Activated B cell treated with CpG ODN at 0.5 μM for 24 hours (primary cell): ENCODE measurements at regions of chr15 and their contacts with region 1.

Region 1: GRCh38 chr15:75639709-75640482 is at the start of gene IMP3:
- DNase-seq: peak; percentile 83
- ATAC-seq: peak; percentile 94
- H3K4me3 Mint-ChIP-seq: peak within 1 kb of the TSS; percentile 91
- H3K27ac Mint-ChIP-seq: peak within 1 kb of the TSS; percentile 92
- H3K4me1 Mint-ChIP-seq: peaks cover 38% of the 10 kb centered on the region
- H3K27me3 Mint-ChIP-seq: no peaks in the 10 kb centered on the region
- CTCF ChIP-seq: no peak
- total RNA-seq, gene IMP3: 65.6 and 72.6 TPM in 2 replicates

Region 2: GRCh38 chr15:73982222-73982962 is 1657.5 kb before region 1 on chr15:
- CTCF ChIA-PET with region 1: no interaction called
- POLR2A ChIA-PET with region 1: no interaction called
- intact Hi-C with region 1: no loop called
- DNase-seq: no peak
- ATAC-seq: peak; percentile 92
- H3K4me3 Mint-ChIP-seq: peak overlapping the region; percentile 53
- H3K27ac Mint-ChIP-seq: peak overlapping the region; percentile 75
- H3K4me1 Mint-ChIP-seq: peaks cover 62% of the 10 kb centered on the region
- H3K27me3 Mint-ChIP-seq: no peaks in the 10 kb centered on the region
- CTCF ChIP-seq: no peak

Region 3: DNA sequence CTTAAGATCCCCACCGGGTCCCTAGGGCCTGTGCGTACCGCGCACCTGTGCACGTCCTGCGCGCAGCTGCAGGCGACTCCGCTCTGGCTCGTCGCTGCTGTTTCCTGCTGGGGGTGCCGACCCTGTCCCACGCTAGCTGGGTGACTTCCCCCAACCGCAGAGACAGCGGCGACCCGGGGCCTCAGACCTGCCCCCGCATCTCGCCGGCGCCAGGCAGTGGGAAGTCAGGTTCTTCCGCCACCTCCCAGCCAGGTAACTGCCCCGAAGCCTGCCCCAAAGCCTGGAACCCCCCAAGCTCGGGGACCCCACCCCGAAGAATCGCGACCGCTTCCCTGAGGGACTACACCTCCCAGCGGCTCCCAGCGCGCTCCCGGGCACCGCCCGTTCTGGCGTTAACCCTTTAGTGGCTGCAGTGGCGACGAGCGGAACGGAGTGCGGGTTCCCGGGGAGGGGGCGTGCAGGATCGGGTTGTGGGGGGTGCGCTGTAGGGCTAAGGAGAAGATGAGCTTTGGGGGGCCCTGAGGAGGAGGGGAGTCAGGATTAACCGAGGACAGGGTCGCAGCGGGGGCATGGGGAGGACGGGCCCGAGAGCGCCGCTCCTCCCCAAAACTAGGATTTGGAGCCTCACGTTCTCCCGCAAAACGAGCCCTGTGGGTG is 292.5 kb before region 1 on chr15:
- CTCF ChIA-PET with region 1: no interaction called
- POLR2A ChIA-PET with region 1: interaction called, 3 read pairs
- intact Hi-C with region 1: loop called (anchors 5 kb)
- DNase-seq: peak; percentile 69
- ATAC-seq: peak; percentile 77
- H3K4me3 Mint-ChIP-seq: peak overlapping the region; percentile 86
- H3K27ac Mint-ChIP-seq: peak overlapping the region; percentile 85
- H3K4me1 Mint-ChIP-seq: peaks cover 46% of the 10 kb centered on the region
- H3K27me3 Mint-ChIP-seq: peaks cover 1% of the 10 kb centered on the region
- CTCF ChIP-seq: no peak

Region 4: GRCh38 chr15:75578948-75579920 is 60.7 kb before region 1 on chr15 and contains the start of gene PTPN9:
- CTCF ChIA-PET with region 1: interaction called, 6 read pairs
- POLR2A ChIA-PET with region 1: interaction called, 34 read pairs
- intact Hi-C with region 1: loop called (anchors 2 kb)
- DNase-seq: peak; percentile 63
- ATAC-seq: peak; percentile 87
- H3K4me3 Mint-ChIP-seq: peak within 1 kb of the TSS; percentile 92
- H3K27ac Mint-ChIP-seq: peak within 1 kb of the TSS; percentile 82
- H3K4me1 Mint-ChIP-seq: peaks cover 19% of the 10 kb centered on the region
- H3K27me3 Mint-ChIP-seq: no peaks in the 10 kb centered on the region
- CTCF ChIP-seq: no peak
- total RNA-seq, gene PTPN9: 18.2 and 19.2 TPM in 2 replicates

Region 5: DNA sequence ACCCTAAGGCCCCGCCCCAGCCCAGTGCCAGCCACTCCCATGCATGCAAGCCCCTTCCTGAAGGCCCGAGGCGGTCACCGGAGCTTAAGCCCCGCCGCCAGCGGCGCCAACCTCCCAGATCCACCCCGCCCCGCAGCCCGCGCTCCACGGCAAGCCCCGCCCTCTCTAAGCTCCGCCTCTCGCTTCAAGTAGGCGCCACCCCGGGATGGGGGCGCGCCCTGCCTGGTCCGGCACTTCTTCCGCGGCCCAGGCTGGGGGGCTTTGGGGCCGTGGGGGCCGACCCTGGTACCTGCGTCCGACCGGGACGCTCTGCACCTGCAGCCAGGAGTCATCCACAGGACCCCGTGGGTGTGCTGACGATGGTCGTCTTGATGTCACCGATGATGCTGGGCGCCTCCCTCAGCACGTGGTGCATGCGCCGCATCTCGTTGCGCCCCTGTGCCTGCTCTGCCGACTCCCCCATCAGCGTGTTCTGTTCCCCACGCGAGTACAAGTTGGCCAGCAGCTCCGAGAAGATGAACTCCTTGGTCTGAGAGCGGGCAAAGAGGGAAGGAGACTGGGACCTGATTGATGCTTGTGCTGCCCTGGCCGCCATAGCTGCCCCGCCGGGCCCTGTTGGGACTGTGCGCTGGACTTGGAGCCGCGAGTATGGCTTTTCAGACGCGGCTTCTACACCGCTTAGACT is 98.9 kb after region 1 on chr15:
- CTCF ChIA-PET with region 1: no interaction called
- POLR2A ChIA-PET with region 1: interaction called, 8 read pairs
- intact Hi-C with region 1: loop called (anchors 1 kb)
- DNase-seq: peak; percentile 95
- ATAC-seq: peak; percentile 98
- H3K4me3 Mint-ChIP-seq: peak overlapping the region; percentile 82
- H3K27ac Mint-ChIP-seq: peak overlapping the region; percentile 65
- H3K4me1 Mint-ChIP-seq: peaks cover 15% of the 10 kb centered on the region
- H3K27me3 Mint-ChIP-seq: peaks cover 7% of the 10 kb centered on the region
- CTCF ChIP-seq: no peak